Right ventricle myocardium inferior (tissue), 1 donor: ENCODE measurements at regions of chr10 and their contacts with region 1.

Region 1: DNA sequence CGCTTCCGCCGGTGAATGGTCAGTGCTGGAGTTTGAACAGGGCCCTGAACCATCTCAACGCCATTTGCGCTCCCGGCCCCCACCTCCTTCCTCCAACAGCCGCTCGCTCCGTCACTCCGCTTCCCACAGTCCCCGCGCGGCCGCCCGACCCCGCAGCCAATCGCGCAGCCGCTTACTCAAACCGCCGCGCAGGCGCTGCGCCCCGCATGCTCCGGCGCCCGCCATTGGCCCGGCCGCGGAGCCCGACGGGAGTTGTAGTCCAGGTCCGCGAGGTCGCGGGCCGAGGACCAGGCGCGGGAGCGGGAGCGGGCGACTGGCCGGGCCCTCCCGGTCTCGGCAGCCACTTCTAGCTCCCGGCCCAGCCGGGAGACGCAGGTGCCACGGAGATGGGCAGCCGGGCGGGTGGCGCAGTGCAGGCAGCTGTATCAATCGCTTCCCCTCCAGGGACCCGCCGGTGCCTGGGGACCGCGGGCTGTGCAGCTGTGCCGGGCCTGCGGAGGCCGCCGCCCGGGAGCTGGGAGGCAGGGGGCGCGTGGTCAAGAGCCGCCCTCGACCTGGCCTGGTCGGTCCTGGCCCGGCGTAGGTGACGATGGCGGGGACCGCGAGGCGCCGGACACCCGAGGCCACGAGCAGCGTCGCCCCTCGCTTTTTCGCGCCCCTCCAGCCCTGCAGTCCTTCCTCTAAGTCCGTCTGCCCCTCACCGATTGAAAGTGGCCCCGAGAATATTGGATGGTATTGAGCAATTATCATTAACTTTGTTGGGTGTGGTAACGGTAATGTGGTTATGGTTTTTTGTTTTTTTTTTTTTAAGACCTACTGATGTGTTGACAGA is at the start of gene WAPL:
- DNase-seq: peak; percentile 98
- ATAC-seq: peak; percentile 99
- total RNA-seq, gene WAPL: 21.5 TPM

Region 2: DNA sequence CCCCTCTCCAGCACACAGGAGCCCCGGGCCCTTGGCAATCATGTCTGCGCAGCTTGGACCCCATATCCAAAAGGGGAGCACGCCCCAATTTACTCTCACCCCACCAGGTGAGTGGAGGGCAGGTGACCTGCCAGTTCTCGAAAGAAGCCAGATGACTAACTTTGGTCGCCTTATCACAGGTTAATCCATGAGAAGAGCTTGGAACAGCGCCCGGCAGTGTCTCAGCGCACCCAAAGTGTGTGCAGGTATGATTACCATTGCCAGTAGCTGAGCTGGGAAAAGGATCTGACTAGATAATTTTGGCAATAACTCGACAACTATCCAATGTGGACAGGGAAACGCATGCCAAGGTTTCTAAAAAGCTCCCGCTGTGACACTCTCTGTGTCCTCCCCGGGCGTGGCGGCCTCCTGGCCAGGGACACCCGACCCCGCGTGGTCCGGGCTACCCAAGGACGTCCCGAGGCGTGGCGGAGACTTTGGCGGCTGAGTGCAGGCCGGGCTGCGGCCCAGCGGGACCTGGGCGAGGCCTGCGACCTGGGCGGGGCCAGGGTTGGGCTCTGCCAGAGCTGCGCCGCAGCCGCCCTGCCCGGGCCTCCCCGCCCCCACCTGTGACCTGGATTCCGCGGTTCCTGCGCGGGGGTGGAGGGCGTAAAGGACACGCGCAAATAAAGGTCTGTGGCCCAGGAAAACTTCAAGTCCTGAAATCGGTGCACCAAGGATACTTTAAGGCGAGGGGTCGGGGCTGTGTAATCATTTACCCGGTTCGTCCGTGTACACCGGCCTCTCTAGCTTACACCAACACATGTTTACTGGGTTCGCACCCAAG is 13.4 kb after region 1 on chr10:
- intact Hi-C with region 1: no loop called
- DNase-seq: peak; percentile 91
- ATAC-seq: peak; percentile 98

Region 3: GRCh38 chr10:86585037-86585725 is 63.3 kb after region 1 on chr10:
- intact Hi-C with region 1: loop called (anchors 5 kb)
- DNase-seq: peak; percentile 75
- ATAC-seq: peak; percentile 93